ENCODE measurements at regions of chr5 and their contacts with region 1.

Region 1: GRCh38 chr5:172770675-172771438 is at the start of gene DUSP1:
- DNase-seq: peak; percentile 100
- H3K4me3 ChIP-seq: peak within 1 kb of the TSS; percentile 85
- H3K27ac ChIP-seq: peak within 1 kb of the TSS; percentile 100
- H3K4me1 ChIP-seq: peaks cover 39% of the 10 kb centered on the region
- H3K27me3 ChIP-seq: no peaks in the 10 kb centered on the region
- total RNA-seq, gene DUSP1: 443 and 459 TPM in 2 replicates

Region 2: DNA sequence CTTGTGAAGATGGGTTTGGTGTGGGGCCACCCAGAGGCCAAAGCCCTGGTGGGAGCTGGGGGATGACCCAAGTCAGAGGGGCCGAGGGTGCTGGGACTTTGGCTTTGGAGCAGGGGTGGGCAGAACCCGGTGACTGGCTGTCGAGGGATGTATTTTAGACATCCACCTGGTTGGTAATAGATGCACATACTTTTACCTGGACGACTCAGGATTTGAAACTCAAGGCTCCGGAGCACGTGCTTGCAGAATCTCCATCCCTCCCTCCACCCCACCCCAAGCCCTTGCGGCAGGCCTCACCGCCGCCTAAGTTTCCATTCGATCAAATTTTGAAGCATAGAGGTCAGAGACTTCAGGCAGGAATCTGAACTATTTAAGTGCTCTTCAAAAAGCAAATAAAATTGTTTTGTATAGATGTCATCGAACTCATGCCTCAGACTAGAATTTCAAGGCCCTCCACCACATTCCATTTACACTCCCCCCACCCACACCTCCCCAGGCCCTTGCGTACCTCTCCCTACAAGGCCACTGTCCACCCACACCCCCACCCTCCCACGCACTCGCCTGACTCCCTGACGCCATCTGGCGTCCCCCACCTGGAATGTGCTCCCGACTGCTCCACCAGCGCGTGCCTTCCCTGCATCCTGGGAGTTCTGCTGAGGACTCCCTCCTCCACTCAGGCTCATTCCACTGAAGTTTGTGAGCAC is 131.8 kb after region 1 on chr5:
- in situ Hi-C with region 1: loop called (anchors 10 kb)
- DNase-seq: peak; percentile 88
- H3K4me3 ChIP-seq: no peak overlapping the region
- H3K27ac ChIP-seq: peak overlapping the region; percentile 99
- H3K4me1 ChIP-seq: peaks cover 58% of the 10 kb centered on the region
- H3K27me3 ChIP-seq: no peaks in the 10 kb centered on the region